ENCODE measurements at regions of chr12 and their contacts with region 1.

Region 1: GRCh38 chr12:503111-503761 is 43.5 kb downstream of the B4GALNT3 start:
- DNase-seq: peak; percentile 93 to 100
- H3K4me3 ChIP-seq: no peak overlapping the region
- H3K27ac ChIP-seq: peak overlapping the region; percentile 75
- H3K4me1 ChIP-seq: peaks cover 30% of the 10 kb centered on the region
- H3K27me3 ChIP-seq: 0 out of 2 replicates have a peak, but pooled peaks cover 3% of the 10 kb centered on the region
- CTCF ChIP-seq: no peak

Region 2: DNA sequence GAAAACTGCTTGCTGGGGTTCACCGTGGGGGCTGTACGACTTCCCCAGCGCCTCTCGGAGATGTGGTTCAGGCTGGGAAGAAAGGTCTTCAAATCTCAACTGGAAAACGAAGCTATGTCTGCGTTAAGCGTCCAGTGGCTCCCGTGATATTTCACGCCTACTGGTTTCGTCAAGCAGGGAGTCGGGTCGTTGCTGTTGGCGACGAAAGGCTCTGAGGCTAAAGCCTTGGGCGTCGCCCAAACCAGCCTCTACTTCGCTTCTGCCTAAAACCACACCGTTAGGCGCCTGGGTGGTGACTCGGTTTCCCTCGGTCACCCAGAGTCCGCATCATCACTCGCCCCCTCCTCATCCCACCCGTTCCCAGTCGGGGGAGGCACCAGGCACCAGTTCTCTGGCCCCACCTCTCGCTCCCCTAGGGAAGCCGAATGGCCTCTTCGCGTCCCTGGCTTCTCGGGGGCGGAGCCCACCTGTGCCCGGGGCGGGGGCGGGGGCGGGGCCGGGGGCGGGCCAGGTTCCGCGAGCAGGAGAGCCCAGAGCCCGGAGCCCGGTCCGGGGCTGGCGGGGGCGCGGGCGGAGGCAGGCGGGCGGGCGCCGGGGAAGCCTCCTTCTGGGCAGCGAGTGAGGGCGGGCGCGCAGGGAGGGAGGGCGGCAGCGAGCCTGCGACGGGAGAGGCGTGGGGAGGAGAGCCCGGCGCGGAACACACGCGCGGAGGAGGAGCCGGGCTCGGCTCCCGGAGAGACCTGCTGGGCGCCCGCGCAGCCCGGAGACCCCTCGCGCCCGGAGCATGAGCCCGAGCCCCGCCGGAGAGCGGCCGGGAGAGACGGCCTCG is 43.6 kb before region 1 on chr12 and contains the start of gene B4GALNT3:
- CTCF ChIA-PET with region 1: no interaction called
- POLR2A ChIA-PET with region 1: no interaction called
- intact Hi-C with region 1: loop called (anchors 1 kb)
- DNase-seq: peak in 1 of 2 experiments; percentile 67
- H3K4me3 ChIP-seq: peak within 1 kb of the TSS; percentile 59; the same call in 1 of the 2 replicates
- H3K27ac ChIP-seq: no peak within 1 kb of the TSS
- H3K4me1 ChIP-seq: peaks cover 24% of the 10 kb centered on the region
- H3K27me3 ChIP-seq: peaks cover 67% of the 10 kb centered on the region
- CTCF ChIP-seq: no peak
- total RNA-seq, gene B4GALNT3: 7.1 and 8.0 TPM in 2 replicates

Region 3: GRCh38 chr12:517538-517937 is 14.3 kb after region 1 on chr12:
- CTCF ChIA-PET with region 1: no interaction called
- POLR2A ChIA-PET with region 1: no interaction called
- intact Hi-C with region 1: no loop called
- DNase-seq: no peak
- H3K4me3 ChIP-seq: no peak overlapping the region
- H3K27ac ChIP-seq: no peak overlapping the region
- H3K4me1 ChIP-seq: peaks cover 12% of the 10 kb centered on the region
- H3K27me3 ChIP-seq: peaks cover 27% of the 10 kb centered on the region; the same call in 1 of the 2 replicates
- CTCF ChIP-seq: no peak

Region 4: GRCh38 chr12:563250-563781 is 60.1 kb after region 1 on chr12:
- CTCF ChIA-PET with region 1: no interaction called
- POLR2A ChIA-PET with region 1: no interaction called
- intact Hi-C with region 1: no loop called
- DNase-seq: no peak
- H3K4me3 ChIP-seq: no peak overlapping the region
- H3K27ac ChIP-seq: no peak overlapping the region
- H3K4me1 ChIP-seq: no peaks in the 10 kb centered on the region
- H3K27me3 ChIP-seq: peaks cover 14% of the 10 kb centered on the region; the same call in 1 of the 2 replicates
- CTCF ChIP-seq: no peak